ENCODE measurements at regions of chr11 and their contacts with region 1.

Region 1: DNA sequence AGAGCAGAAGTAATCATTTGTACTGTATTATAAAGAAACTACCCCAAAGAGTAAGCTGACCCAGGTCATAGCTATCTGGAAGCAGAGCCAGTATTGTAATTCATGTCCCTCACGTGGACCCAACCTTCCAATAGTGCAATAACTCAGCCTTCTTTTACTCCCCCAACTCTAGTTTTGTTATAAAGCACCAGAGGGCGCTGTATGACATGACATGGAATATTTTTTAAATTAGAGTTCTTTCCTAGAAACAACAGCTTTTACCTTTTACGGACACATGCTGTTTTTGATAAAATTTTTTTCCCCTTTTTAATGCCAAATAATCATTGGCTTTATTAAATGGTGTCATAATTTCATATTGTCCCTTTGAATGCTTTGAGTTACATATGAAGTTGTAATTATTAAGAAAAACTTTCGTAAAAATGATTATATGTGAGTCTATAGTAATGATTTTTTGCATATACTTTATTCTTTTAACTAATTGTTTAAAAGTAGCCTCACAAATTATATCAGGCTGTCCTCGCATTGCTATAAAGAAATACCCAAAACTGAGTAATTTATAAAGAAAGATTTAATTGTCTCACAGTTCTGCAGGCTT is 76.9 kb downstream of the DKK3 start:
- DNase-seq: peak in 1 of 3 donors; percentile 49
- ATAC-seq: peak; percentile 96 to 100 (median 98)
- H3K4me3 ChIP-seq: no peak overlapping the region
- H3K27ac ChIP-seq: no peak overlapping the region
- H3K4me1 ChIP-seq: no peaks in the 10 kb centered on the region
- H3K27me3 ChIP-seq: no peaks in the 10 kb centered on the region
- CTCF ChIP-seq: peak; percentile 58 to 84 (median 72)
- POLR2A ChIP-seq: no peak

Region 2: DNA sequence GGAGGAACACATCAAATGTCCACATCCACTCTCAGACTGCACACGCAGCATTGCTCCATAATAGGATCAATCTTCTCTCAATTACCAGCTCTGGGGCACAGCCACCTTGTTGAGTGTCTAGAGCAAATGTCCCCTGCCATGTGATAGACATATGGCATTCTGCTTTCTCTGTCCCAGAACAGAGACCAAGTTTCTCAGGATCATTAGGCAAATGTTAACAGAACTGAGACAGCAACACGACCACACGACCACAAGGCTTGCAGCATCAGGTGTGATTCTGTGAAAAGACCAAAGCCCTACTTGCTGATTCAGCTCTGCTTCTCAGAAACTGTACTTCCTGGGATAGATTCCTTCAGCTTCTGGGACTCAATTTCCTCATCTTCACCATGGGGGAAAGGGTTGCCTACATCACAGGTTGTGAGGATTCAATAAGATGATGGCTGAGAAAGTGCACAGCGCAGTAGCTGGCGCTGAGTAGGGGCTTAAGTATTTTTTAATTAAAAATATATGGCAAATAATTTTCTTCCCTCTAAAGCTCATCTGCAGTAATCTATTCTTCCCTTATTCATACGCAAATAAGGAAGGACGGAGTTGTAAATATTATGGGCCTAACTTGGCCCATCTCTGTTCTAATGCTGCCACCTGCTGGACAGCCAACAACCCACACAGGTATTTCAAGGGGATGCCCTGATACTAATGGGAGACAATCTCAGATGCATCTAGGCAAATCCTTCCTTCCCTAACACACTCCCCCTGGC is 144.1 kb before region 1 on chr11:
- intact Hi-C with region 1: no loop called
- DNase-seq: peak; percentile 65 to 73 (median 68)
- ATAC-seq: peak; percentile 92 to 96 (median 94)
- H3K4me3 ChIP-seq: no peak overlapping the region
- H3K27ac ChIP-seq: no peak overlapping the region
- H3K4me1 ChIP-seq: no peaks in the 10 kb centered on the region
- H3K27me3 ChIP-seq: no peaks in the 10 kb centered on the region
- CTCF ChIP-seq: peak; percentile 88 to 91 (median 89)
- POLR2A ChIP-seq: no peak

Region 3: DNA sequence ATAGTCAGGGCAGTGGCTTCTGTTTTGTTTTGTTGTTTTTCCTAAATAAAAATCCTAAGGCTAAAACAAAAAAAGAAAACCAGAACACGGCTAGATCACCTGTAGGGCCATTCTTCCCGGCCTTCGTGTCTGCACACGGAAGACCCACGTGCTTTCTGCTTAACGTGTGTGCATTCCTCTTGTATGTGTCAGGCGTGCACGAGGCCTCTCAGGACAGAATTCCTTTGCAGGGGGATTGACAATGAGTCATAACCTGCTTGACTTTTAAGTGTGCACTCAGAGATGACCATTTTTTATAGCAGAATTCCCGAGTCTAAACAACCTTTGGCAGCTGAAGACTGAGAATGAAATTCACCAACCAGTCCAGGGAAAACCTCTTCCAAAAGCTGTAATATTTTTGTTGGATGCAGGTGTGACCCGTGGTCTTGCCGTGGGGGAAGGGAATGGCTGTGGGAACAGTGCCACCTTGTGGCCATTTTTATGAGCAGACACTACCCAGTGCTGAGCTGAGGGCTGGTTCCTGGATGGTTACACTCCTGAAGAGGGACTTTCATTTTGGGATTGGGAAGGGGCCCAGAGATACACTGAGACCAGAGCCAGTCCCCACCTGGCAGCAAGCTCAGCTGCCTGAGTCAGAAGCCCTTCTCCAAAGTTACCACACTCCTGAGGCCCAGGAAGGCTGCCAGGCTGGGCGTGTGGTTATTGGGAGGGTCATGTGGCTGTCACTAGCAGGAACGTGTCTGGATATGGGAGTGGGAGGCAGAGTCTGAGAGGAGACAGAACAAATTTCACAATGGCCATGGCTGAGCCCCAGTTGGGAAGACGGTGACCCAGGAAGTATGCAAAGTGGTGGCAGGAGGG is 112.6 kb after region 1 on chr11:
- intact Hi-C with region 1: loop called in 1 of 2 experiments (anchors 10 kb)
- DNase-seq: peak; percentile 75 to 87 (median 79)
- ATAC-seq: peak; percentile 77 to 93 (median 90)
- H3K4me3 ChIP-seq: no peak overlapping the region
- H3K27ac ChIP-seq: peak overlapping the region in 2 of 3 donors; percentile 0 to 13
- H3K4me1 ChIP-seq: peaks cover 0 to 9% (median 3%) of the 10 kb centered on the region in 4 donors
- H3K27me3 ChIP-seq: no peaks in the 10 kb centered on the region
- CTCF ChIP-seq: peak; percentile 88 to 96 (median 94)
- POLR2A ChIP-seq: no peak

Region 4: DNA sequence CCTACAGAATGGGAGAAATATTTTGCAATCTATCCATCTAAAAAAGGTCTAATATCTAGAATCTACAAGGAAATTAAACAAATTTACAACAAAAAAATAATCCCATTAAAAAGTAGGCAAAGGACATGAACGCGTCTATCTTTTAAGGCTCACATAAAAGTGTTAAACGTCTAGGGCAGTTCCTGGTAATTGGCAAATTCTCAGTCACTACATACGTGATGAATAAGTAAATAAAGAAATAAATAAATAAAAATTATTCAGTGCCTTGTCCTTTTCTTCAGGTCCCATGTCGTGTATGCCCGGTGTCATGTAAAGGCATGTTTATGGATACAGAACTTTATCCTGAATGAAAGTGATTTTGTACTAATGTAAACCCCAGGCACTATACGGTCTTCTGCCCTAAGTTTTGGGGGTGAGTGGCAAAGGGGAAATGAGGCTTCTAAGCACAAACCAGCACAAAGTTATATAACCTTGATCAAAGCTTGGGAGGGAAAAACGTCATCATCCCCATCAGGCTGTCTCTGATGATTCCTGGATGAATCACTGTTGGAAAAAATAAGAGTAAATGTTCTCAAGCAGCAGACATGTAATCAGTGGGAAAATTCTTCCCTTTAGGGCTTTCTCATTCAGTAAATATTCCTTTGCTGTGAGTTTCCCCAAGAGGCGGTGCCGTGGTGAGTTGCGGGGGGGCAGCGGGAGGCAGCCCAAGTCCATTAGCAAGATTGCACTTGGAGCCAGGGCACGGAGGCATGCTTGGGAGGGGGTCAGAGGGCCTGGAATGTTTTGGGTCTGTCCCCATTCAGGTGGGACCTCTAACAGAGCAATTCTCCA is 148.4 kb after region 1 on chr11:
- intact Hi-C with region 1: no loop called
- DNase-seq: peak in 1 of 3 donors; percentile 23
- ATAC-seq: peak in 1 of 4 donors; percentile 52
- H3K4me3 ChIP-seq: no peak overlapping the region
- H3K27ac ChIP-seq: no peak overlapping the region
- H3K4me1 ChIP-seq: no peaks in the 10 kb centered on the region
- H3K27me3 ChIP-seq: no peaks in the 10 kb centered on the region
- CTCF ChIP-seq: no peak
- POLR2A ChIP-seq: no peak

Region 5: GRCh38 chr11:12281571-12282478 is 350.3 kb after region 1 on chr11:
- intact Hi-C with region 1: loop called in 1 of 2 experiments (anchors 10 kb)
- DNase-seq: peak; percentile 76 to 82 (median 81)
- ATAC-seq: peak; percentile 88 to 96 (median 92)
- H3K4me3 ChIP-seq: no peak overlapping the region
- H3K27ac ChIP-seq: no peak overlapping the region
- H3K4me1 ChIP-seq: no peaks in the 10 kb centered on the region
- H3K27me3 ChIP-seq: no peaks in the 10 kb centered on the region
- CTCF ChIP-seq: peak; percentile 90 to 97 (median 96)
- POLR2A ChIP-seq: no peak